ENCODE measurements at regions of chr7 and their contacts with region 1.

Region 1: GRCh38 chr7:114865564-114865963 is 56.3 kb upstream of the MDFIC start:
- H3K4me3 Mint-ChIP-seq: no peak overlapping the region
- H3K27ac Mint-ChIP-seq: no peak overlapping the region
- H3K4me1 Mint-ChIP-seq: no peaks in the 10 kb centered on the region
- H3K27me3 Mint-ChIP-seq: no peaks in the 10 kb centered on the region

Region 2: GRCh38 chr7:114026486-114027089 is 839.0 kb before region 1 on chr7:
- intact Hi-C with region 1: loop called (anchors 5 kb)
- H3K4me3 Mint-ChIP-seq: no peak overlapping the region
- H3K27ac Mint-ChIP-seq: no peak overlapping the region
- H3K4me1 Mint-ChIP-seq: no peaks in the 10 kb centered on the region
- H3K27me3 Mint-ChIP-seq: no peaks in the 10 kb centered on the region

Region 3: DNA sequence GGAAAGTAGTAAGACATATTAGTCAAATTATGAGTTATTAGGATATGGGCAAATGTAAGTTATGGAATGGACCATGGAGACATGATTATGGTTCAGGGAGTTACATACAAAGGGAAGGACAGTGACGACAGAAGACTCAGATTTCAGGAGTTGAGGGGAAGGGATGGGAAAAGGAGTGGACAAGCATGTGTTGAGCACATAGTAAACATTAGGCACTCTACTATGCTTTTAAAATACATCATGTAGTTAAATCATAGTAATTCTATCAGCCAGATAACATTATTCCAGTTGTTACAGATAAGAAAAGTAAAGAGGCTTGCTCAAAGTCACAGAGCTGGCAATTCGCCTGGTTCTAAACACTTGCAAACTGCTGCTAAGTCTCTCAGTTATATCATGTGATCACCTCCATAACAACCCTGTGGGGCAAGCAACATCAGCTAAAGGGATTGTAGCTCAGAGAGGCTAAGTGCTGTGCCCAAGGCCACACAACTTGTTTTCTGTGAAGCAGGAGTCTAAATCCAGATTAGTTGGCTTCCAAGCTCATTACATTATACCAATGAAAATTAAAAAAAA is 58.9 kb before region 1 on chr7:
- intact Hi-C with region 1: no loop called
- H3K4me3 Mint-ChIP-seq: no peak overlapping the region
- H3K27ac Mint-ChIP-seq: no peak overlapping the region
- H3K4me1 Mint-ChIP-seq: no peaks in the 10 kb centered on the region
- H3K27me3 Mint-ChIP-seq: no peaks in the 10 kb centered on the region

Region 4: GRCh38 chr7:114953724-114954123 is 88.2 kb after region 1 on chr7:
- intact Hi-C with region 1: loop called (anchors 5 kb)
- H3K4me3 Mint-ChIP-seq: no peak overlapping the region
- H3K27ac Mint-ChIP-seq: no peak overlapping the region
- H3K4me1 Mint-ChIP-seq: peaks cover 53% of the 10 kb centered on the region
- H3K27me3 Mint-ChIP-seq: no peaks in the 10 kb centered on the region

Region 5: GRCh38 chr7:115475761-115476385 is 610.3 kb after region 1 on chr7:
- intact Hi-C with region 1: loop called (anchors 10 kb)
- H3K4me3 Mint-ChIP-seq: no peak overlapping the region
- H3K27ac Mint-ChIP-seq: no peak overlapping the region
- H3K4me1 Mint-ChIP-seq: peaks cover 10% of the 10 kb centered on the region
- H3K27me3 Mint-ChIP-seq: peaks cover 31% of the 10 kb centered on the region

Region 6: DNA sequence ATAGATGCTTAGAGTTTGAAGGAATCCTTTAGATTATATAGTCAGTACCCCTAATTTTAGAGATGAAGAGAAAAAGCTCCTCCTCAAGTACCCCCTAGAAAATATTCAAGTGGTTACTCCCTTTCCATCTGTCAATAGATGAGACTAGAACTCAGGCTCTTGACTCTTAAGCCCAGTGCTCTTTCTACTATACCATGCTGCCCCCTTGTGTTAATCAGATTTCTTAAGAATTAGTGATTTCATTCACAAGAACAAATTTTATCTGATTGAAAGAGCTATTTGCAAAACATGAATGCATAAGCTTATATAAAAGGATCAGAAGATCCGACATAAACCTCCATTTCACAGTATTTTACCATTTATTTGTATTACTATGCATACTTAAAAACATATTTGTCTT is 985.7 kb after region 1 on chr7:
- intact Hi-C with region 1: loop called (anchors 10 kb)
- H3K4me3 Mint-ChIP-seq: no peak overlapping the region
- H3K27ac Mint-ChIP-seq: no peak overlapping the region
- H3K4me1 Mint-ChIP-seq: no peaks in the 10 kb centered on the region
- H3K27me3 Mint-ChIP-seq: no peaks in the 10 kb centered on the region